ENCODE measurements at regions of chr11 and their contacts with region 1.

Region 1: DNA sequence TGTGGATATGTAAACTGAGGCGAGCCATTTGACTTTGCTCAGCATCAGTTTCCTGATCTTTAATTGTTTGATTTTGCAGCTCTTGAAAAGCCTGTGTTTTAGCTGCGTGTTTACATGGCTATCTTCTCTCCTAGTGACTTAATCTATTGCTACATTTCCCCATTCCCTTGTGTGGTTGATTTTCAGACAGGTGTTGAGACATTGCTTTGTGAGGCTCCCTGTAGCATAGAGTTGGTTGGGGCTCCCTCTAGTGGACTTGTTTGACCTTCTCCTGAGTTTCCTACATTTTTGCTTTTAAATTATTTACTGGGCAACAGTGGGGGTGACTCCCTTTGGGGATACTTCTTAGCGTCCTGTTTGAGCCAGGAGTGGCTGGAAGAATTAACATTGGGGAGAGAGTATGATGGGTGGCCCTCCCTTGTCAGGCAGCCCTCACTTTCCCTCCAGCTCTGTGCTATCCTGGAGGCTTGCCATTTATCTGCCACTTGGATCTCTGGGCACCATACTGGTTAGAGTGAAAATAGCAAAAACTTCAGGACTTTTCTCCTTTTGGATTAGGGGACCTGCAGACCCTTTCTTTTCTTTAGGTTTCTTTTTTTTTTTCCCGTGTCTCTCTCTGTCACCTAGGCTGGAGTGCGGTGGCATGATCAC is 9.2 kb upstream of the CBL start:
- DNase-seq: peak; percentile 87
- ATAC-seq: peak; percentile 96
- H3K4me3 ChIP-seq: no peak overlapping the region
- H3K4me3 Mint-ChIP-seq: no peak overlapping the region
- H3K27ac ChIP-seq: no peak overlapping the region
- H3K27ac Mint-ChIP-seq: no peak overlapping the region
- H3K4me1 ChIP-seq: no peaks in the 10 kb centered on the region
- H3K4me1 Mint-ChIP-seq: no peaks in the 10 kb centered on the region
- H3K27me3 ChIP-seq: no peaks in the 10 kb centered on the region
- H3K27me3 Mint-ChIP-seq: peaks cover 5% of the 10 kb centered on the region
- CTCF ChIP-seq: peak; percentile 84

Region 2: DNA sequence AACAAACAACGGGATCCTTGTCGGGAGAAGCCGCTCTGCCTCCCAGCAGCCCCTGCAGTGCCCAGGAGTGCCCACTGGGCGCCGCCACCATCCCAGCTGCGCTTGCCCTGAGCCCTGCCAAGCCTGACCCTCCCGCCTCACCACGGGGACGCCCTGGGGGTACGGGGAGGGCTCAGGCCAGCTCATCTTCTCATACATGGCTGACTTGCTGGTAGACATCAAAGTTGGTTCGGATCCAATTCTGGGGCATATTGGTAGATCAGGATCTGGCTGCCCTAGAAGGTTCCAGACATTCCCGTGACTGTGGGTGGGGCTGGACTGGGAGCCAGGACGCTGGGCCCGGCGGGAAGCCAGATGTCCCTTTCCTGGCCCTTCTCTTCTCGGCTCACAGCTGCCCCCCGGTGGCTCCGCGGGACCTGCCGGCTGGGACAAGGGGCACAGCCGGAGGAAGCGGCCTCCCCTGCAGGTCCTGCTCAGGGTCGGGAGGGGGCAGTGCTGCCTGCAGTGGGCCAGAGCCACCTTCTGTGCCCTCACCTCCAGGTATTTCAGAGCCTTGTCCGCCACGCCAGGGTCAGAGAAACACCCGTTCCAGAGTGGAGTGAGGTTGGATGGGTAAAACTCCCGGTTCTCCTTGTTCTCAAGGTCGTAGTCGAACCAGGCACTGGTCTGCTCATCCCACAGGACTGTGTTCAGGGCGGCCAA is 507.0 kb before region 1 on chr11:
- CTCF ChIA-PET with region 1: interaction called, 3 read pairs
- POLR2A ChIA-PET with region 1: no interaction called
- intact Hi-C with region 1: loop called (anchors 5 kb)
- DNase-seq: peak; percentile 88
- ATAC-seq: peak; percentile 94
- H3K4me3 ChIP-seq: peak overlapping the region in 4 of 5 experiments; percentile 36 to 67 (median 52)
- H3K4me3 Mint-ChIP-seq: peak overlapping the region; percentile 85
- H3K27ac ChIP-seq: peak overlapping the region in 1 of 2 donors; percentile 51
- H3K27ac Mint-ChIP-seq: peak overlapping the region; percentile 68
- H3K4me1 ChIP-seq: peaks cover 10 to 27% of the 10 kb centered on the region in 2 donors
- H3K4me1 Mint-ChIP-seq: peaks cover 20% of the 10 kb centered on the region
- H3K27me3 ChIP-seq: peaks cover 0 to 4% (median 0%) of the 10 kb centered on the region in 4 experiments
- H3K27me3 Mint-ChIP-seq: peaks cover 10% of the 10 kb centered on the region
- CTCF ChIP-seq: peak; percentile 96

Region 3: GRCh38 chr11:119067371-119068222 is 129.4 kb before region 1 on chr11 and contains the start of gene VPS11:
- CTCF ChIA-PET with region 1: interaction called, 7 read pairs
- POLR2A ChIA-PET with region 1: no interaction called
- intact Hi-C with region 1: loop called (anchors 1 kb)
- DNase-seq: peak; percentile 97
- ATAC-seq: peak; percentile 96
- H3K4me3 ChIP-seq: peak within 1 kb of the TSS; percentile 72 to 98 (median 96)
- H3K4me3 Mint-ChIP-seq: peak within 1 kb of the TSS; percentile 100
- H3K27ac ChIP-seq: peak within 1 kb of the TSS; percentile 88 to 92
- H3K27ac Mint-ChIP-seq: peak within 1 kb of the TSS; percentile 98
- H3K4me1 ChIP-seq: peaks cover 15 to 28% of the 10 kb centered on the region in 2 donors
- H3K4me1 Mint-ChIP-seq: peaks cover 38% of the 10 kb centered on the region
- H3K27me3 ChIP-seq: no peaks in the 10 kb centered on the region
- H3K27me3 Mint-ChIP-seq: no peaks in the 10 kb centered on the region
- CTCF ChIP-seq: no peak
- total RNA-seq, gene VPS11: 64.7 and 71.1 TPM in 2 replicates

Region 4: GRCh38 chr11:119130662-119131061 is 66.3 kb before region 1 on chr11:
- CTCF ChIA-PET with region 1: no interaction called
- POLR2A ChIA-PET with region 1: no interaction called
- intact Hi-C with region 1: no loop called
- DNase-seq: no peak
- ATAC-seq: no peak
- H3K4me3 ChIP-seq: no peak overlapping the region
- H3K4me3 Mint-ChIP-seq: no peak overlapping the region
- H3K27ac ChIP-seq: no peak overlapping the region
- H3K27ac Mint-ChIP-seq: no peak overlapping the region
- H3K4me1 ChIP-seq: no peaks in the 10 kb centered on the region
- H3K4me1 Mint-ChIP-seq: peaks cover 5% of the 10 kb centered on the region
- H3K27me3 ChIP-seq: no peaks in the 10 kb centered on the region
- H3K27me3 Mint-ChIP-seq: no peaks in the 10 kb centered on the region
- CTCF ChIP-seq: no peak

Region 5: GRCh38 chr11:119144825-119145486 is 52.0 kb before region 1 on chr11:
- CTCF ChIA-PET with region 1: interaction called, 24 read pairs
- POLR2A ChIA-PET with region 1: no interaction called
- intact Hi-C with region 1: no loop called
- DNase-seq: peak; percentile 55
- ATAC-seq: peak; percentile 74
- H3K4me3 ChIP-seq: no peak overlapping the region
- H3K4me3 Mint-ChIP-seq: no peak overlapping the region
- H3K27ac ChIP-seq: no peak overlapping the region
- H3K27ac Mint-ChIP-seq: no peak overlapping the region
- H3K4me1 ChIP-seq: peaks cover 12 to 19% of the 10 kb centered on the region in 2 donors
- H3K4me1 Mint-ChIP-seq: peaks cover 13% of the 10 kb centered on the region
- H3K27me3 ChIP-seq: peaks cover 0 to 54% (median 28%) of the 10 kb centered on the region in 4 experiments
- H3K27me3 Mint-ChIP-seq: peaks cover 45% of the 10 kb centered on the region
- CTCF ChIP-seq: peak; percentile 47

Region 6: DNA sequence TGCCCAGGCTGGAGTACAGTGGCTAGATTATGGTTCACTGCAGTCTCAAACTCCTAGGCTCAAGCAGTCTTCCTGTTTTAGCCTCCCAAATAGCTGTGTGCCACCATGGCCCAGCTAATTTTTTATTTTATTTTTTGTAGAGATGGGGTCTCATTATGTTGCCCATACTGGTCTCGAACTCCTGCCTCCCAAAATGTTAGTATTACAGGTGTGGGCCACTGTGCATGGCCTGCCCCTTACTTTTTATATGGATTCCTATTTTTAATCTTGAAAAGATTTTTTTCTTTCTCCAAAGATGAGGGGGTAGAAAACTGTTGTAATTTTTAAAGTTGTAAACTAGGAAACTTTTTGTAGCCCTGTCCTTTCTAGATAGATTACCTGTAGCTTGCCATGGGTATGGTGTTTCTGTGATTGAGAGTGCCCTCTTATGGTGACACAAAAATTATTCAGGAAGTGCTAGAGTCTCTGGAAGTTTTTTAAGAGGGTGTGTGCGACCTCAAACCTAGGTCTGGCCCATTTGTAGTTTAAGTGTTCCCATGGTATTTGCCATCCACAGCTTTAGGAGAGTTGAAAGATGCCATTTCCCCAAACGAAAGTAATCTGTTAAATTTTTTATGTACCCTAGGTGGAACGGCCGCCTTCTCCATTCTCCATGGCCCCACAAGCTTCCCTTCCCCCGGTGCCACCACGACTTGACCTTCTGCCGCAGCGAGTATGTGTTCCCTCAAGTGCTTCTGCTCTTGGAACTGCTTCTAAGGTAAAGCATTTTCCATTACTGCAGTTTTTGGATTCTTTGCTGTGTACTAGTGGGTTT is 87.6 kb after region 1 on chr11:
- CTCF ChIA-PET with region 1: interaction called, 33 read pairs
- POLR2A ChIA-PET with region 1: no interaction called
- intact Hi-C with region 1: no loop called
- DNase-seq: peak; percentile 70
- ATAC-seq: peak; percentile 74
- H3K4me3 ChIP-seq: no peak overlapping the region
- H3K4me3 Mint-ChIP-seq: no peak overlapping the region
- H3K27ac ChIP-seq: no peak overlapping the region
- H3K27ac Mint-ChIP-seq: peak overlapping the region; percentile 8
- H3K4me1 ChIP-seq: peaks cover 3 to 5% of the 10 kb centered on the region in 2 donors
- H3K4me1 Mint-ChIP-seq: peaks cover 6% of the 10 kb centered on the region
- H3K27me3 ChIP-seq: no peaks in the 10 kb centered on the region
- H3K27me3 Mint-ChIP-seq: no peaks in the 10 kb centered on the region
- CTCF ChIP-seq: peak; percentile 70

Region 7: DNA sequence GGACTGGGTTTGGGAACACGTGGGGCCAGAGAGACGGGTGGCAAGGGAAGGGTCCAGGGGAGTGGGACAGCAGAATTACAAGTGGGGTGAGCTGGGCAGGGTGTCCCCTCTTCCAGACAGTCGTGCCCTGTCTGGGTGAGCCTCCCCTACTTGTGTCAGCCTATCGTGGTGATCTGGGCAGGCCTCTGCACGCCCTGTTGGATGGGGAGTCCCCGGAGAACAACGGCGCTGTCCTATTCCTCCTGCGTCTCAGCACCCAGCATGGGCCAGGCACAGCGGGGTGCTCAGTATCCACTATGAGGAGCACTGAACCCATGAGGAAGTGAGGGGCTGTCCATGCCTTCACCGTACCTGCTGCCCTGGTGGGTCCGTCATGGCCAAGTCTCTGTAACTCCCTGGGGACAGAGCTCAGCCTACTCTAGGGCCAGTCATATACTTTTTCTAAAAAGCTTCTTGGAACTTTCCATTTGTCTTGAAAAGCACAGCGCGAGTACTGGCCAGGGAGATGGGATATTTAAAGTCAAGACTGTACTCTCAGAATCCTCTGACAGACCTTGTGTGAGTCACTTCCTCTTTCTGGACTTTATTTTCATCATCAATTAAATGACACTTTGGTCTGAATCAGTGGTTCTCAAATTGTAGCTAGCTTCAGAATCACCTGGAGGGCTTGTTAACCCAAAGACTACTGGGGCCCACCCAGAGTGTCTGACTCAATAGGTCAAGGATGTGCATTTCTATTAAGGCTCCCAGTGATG is 613.7 kb after region 1 on chr11:
- CTCF ChIA-PET with region 1: no interaction called
- POLR2A ChIA-PET with region 1: no interaction called
- intact Hi-C with region 1: no loop called
- DNase-seq: no peak
- ATAC-seq: no peak
- H3K4me3 ChIP-seq: no peak overlapping the region
- H3K4me3 Mint-ChIP-seq: no peak overlapping the region
- H3K27ac ChIP-seq: no peak overlapping the region
- H3K27ac Mint-ChIP-seq: no peak overlapping the region
- H3K4me1 ChIP-seq: no peaks in the 10 kb centered on the region
- H3K4me1 Mint-ChIP-seq: no peaks in the 10 kb centered on the region
- H3K27me3 ChIP-seq: peaks cover 0 to 2% (median 0%) of the 10 kb centered on the region in 4 experiments
- H3K27me3 Mint-ChIP-seq: peaks cover 14% of the 10 kb centered on the region
- CTCF ChIP-seq: no peak